Mucosa of descending colon (tissue), 3 donors: ENCODE measurements at regions of chr14 and their contacts with region 1.

Region 1: DNA sequence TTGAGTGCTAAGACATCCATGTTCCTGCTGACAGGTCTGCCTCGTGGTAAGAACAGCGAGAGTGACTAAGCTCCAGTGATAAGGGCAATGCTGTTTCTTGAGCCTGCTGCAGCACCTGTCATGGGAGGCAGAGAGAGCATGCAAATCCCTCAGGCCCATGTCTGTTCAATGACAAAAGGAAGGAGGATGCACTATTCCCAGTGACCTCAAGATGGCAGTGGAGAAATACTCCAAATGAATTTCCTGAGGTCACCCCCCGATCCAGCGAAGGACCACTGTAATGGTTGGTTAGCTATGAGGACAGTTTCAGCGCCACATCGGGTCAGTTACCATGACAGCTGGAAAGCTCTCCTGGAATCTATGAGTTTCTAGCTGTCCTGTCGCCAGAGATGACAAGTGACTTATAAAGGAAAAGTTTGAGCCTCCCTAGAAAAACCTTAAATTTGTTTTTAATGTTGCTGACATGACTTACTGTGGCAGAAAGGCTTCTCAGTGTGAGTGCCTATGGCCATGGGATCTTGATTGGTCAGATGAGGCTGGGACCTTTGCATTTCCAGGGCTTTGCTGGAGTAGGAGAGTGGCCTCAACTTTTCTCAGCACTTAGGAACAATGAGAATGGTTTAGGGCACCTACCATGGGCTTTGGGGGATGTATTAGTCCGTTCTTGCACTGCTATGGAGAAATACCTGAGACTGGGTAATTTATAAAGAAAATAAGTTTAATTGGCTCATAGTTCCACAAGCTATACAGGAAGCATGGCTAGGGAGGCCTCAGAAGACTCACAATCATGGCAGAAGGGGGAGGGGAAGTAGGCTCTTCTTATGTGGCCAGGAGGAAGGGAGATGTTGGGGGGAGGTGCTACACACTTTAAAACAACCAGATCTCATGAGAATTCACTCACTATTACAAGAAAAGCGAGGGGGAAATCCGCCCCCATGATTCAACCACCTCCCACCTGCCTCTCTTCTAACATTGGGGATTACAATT is 88.0 kb upstream of the TMEM260 start:
- DNase-seq: peak in 1 of 3 donors; percentile 58
- ATAC-seq: peak; percentile 87
- H3K4me3 ChIP-seq: no peak overlapping the region
- H3K4me1 ChIP-seq: no peaks in the 10 kb centered on the region
- CTCF ChIP-seq: peak; percentile 54

Region 2: DNA sequence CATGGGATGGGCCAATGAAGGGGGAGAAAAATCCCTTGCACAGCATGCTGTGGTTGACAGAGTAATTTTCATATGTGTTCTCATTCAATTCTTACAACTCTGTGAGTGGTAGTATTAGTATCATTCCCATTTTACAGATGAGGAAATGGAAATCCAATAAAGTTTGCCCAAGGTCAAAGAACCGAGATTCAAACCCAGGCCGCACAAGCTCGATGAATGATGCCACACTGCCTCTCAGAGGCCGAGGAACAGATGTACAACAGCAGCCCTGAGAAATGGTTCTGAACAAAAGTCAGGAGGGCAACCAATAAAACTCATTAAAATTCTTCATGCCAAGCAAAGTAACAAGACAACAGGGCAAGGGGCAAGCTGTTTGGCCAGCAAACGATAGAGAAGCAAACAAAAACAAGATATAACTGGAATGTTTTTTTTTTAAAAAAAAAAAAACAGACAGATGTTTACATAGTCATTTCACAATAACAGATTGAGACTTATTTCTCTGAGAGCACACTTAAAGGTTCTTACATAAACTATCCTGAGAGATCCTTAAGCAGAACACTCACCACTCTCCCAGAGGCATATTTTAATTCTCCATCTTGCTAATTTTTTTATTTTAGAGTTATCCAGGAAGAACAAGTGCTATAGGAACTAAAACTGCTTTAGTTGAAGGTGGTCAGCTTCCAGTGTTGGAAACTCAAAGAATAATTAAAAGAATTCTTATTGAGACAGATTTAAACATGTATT is 691.3 kb after region 1 on chr14:
- intact Hi-C with region 1: loop called in 1 of 2 experiments (anchors 10 kb)
- DNase-seq: no peak
- ATAC-seq: no peak
- H3K4me3 ChIP-seq: no peak overlapping the region
- H3K4me1 ChIP-seq: no peaks in the 10 kb centered on the region
- CTCF ChIP-seq: no peak

Region 3: GRCh38 chr14:57317316-57317715 is 825.7 kb after region 1 on chr14:
- intact Hi-C with region 1: loop called (anchors 10 kb)
- DNase-seq: peak in 2 of 3 donors; percentile 56 to 88
- ATAC-seq: peak; percentile 81
- H3K4me3 ChIP-seq: no peak overlapping the region
- H3K4me1 ChIP-seq: no peaks in the 10 kb centered on the region
- CTCF ChIP-seq: peak; percentile 85